ENCODE measurements at regions of chr7 and their contacts with region 1.

Region 1: GRCh38 chr7:105641297-105641810 is 60.1 kb upstream of the EFCAB10 start:
- DNase-seq: no peak
- ATAC-seq: no peak
- H3K4me3 ChIP-seq: no peak overlapping the region
- H3K4me3 Mint-ChIP-seq: no peak overlapping the region
- H3K27ac ChIP-seq: no peak overlapping the region
- H3K27ac Mint-ChIP-seq: no peak overlapping the region
- H3K4me1 ChIP-seq: no peaks in the 10 kb centered on the region
- H3K4me1 Mint-ChIP-seq: peaks cover 0 to 3% (median 0%) of the 10 kb centered on the region in 3 donors
- H3K27me3 ChIP-seq: no peaks in the 10 kb centered on the region
- H3K27me3 Mint-ChIP-seq: no peaks in the 10 kb centered on the region

Region 2: GRCh38 chr7:105429746-105430612 is 211.4 kb before region 1 on chr7:
- CTCF ChIA-PET with region 1: no interaction called
- POLR2A ChIA-PET with region 1: no interaction called
- DNase-seq: peak in 34 of 35 experiments; percentile 20 to 76 (median 46)
- ATAC-seq: peak; percentile 63 to 74 (median 74)
- H3K4me3 ChIP-seq: no peak overlapping the region
- H3K4me3 Mint-ChIP-seq: no peak overlapping the region
- H3K27ac ChIP-seq: no peak overlapping the region
- H3K27ac Mint-ChIP-seq: peak overlapping the region in 1 of 2 donors; percentile 44
- H3K4me1 ChIP-seq: no peaks in the 10 kb centered on the region
- H3K4me1 Mint-ChIP-seq: peaks cover 3 to 4% (median 4%) of the 10 kb centered on the region in 3 donors
- H3K27me3 ChIP-seq: no peaks in the 10 kb centered on the region
- H3K27me3 Mint-ChIP-seq: no peaks in the 10 kb centered on the region

Region 3: DNA sequence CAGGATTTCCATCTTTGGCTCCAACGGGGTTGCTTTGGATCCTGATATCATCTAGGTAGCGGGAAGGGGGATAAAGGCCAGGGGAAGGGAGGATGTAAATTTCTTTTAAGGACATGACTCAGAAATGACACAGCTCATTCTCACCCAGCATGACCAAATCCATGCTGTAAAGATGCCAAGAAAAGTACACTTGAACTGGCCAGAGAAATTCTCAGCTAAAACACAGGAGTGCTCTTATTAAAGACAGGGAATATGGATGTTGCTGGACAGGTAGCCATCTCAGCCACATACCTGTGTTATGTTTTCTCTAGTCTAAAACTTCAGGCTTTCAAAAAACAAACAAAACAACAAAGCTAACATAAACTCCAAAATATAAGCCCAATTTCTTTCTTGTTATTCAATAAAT is 575.2 kb after region 1 on chr7:
- CTCF ChIA-PET with region 1: no interaction called
- POLR2A ChIA-PET with region 1: interaction called, 13 to 18 read pairs
- DNase-seq: no peak
- ATAC-seq: no peak
- H3K4me3 ChIP-seq: no peak overlapping the region
- H3K4me3 Mint-ChIP-seq: no peak overlapping the region
- H3K27ac ChIP-seq: no peak overlapping the region
- H3K27ac Mint-ChIP-seq: no peak overlapping the region
- H3K4me1 ChIP-seq: no peaks in the 10 kb centered on the region
- H3K4me1 Mint-ChIP-seq: peaks cover 0 to 2% (median 0%) of the 10 kb centered on the region in 3 donors
- H3K27me3 ChIP-seq: peaks cover 0 to 6% of the 10 kb centered on the region in 2 experiments
- H3K27me3 Mint-ChIP-seq: peaks cover 12 to 15% of the 10 kb centered on the region in 2 donors